ENCODE measurements at regions of chr15 and their contacts with region 1.

Region 1: DNA sequence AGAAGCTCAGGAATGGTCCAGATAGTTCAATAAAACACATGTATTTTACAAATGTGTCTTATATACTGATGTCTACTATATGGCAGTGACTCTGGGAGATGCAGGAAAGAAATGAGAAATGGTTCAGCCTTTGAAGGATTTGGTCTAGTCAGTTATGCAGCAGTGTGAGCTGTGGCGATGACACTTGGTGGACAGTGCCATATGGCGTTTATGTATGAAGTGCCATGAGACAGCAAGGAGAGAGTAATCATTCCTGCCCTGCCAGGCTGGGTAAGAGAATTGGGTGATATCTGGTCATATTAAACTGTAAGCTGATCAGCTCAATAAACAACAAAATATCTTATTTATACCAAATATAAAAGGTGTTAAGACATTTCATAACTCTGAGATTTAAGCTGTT is 47.6 kb upstream of the ANP32A start:
- DNase-seq: no peak
- CTCF ChIP-seq: no peak

Region 2: GRCh38 chr15:68730471-68730919 is 137.8 kb before region 1 on chr15:
- CTCF ChIA-PET with region 1: interaction called, 11 read pairs
- POLR2A ChIA-PET with region 1: no interaction called
- DNase-seq: peak; percentile 48
- CTCF ChIP-seq: peak; percentile 46

Measured in GM10248 (cell line).